ENCODE measurements at regions of chr10 and their contacts with region 1.

Region 1: DNA sequence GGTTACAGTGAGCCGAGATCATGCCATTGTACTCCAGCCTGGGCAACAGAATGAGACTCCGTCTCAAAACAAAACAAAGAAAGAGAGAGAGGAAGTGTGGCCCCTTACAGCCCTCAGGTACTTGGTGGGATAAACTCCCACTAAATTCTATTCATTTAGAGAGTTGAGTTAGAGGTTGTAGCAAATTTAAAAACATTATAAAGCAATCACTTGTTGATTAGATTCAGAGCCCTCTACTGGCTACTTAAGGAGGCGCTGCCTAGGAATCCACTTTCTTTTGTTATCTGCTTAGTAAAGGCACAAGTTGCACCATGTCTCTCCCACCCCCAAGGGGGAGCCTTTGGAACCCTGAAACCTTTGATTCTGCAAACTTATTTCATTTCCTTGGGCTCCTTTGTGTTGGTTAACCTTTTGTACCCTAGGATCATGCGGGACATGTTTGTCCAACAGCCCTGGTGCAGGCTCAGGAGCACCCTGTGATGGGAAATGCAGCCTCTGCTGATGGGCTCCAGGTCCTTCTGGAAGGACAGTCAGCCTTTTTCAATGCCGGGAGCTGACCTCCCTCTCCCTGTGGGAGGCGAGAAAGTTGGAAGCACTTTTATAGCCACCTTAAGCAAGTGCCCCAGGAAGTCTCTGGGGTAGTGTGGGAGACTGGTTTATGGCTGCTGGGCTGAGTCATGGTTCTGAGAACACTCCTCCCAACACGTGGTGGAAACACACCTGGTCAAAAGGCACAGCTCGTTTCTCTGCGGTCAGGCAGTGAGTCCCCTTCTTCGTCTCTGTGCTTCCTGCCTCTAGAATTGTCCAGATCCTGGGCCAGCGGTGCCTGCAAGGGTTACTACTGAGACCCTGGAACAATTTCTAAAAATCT is 2.3 kb downstream of the HKDC1 start:
- DNase-seq: peak; percentile 92
- ATAC-seq: peak; percentile 88
- H3K4me3 Mint-ChIP-seq: peak overlapping the region; percentile 65
- H3K27ac Mint-ChIP-seq: peak overlapping the region; percentile 87
- H3K4me1 Mint-ChIP-seq: peaks cover 33% of the 10 kb centered on the region
- H3K27me3 Mint-ChIP-seq: no peaks in the 10 kb centered on the region
- CTCF ChIP-seq: peak; percentile 87

Region 2: GRCh38 chr10:68938119-68938518 is 284.3 kb before region 1 on chr10:
- CTCF ChIA-PET with region 1: no interaction called
- POLR2A ChIA-PET with region 1: no interaction called
- intact Hi-C with region 1: no loop called
- DNase-seq: no peak
- ATAC-seq: no peak
- H3K4me3 Mint-ChIP-seq: no peak overlapping the region
- H3K27ac Mint-ChIP-seq: peak overlapping the region; percentile 58
- H3K4me1 Mint-ChIP-seq: peaks cover 9% of the 10 kb centered on the region
- H3K27me3 Mint-ChIP-seq: no peaks in the 10 kb centered on the region
- CTCF ChIP-seq: no peak

Region 3: DNA sequence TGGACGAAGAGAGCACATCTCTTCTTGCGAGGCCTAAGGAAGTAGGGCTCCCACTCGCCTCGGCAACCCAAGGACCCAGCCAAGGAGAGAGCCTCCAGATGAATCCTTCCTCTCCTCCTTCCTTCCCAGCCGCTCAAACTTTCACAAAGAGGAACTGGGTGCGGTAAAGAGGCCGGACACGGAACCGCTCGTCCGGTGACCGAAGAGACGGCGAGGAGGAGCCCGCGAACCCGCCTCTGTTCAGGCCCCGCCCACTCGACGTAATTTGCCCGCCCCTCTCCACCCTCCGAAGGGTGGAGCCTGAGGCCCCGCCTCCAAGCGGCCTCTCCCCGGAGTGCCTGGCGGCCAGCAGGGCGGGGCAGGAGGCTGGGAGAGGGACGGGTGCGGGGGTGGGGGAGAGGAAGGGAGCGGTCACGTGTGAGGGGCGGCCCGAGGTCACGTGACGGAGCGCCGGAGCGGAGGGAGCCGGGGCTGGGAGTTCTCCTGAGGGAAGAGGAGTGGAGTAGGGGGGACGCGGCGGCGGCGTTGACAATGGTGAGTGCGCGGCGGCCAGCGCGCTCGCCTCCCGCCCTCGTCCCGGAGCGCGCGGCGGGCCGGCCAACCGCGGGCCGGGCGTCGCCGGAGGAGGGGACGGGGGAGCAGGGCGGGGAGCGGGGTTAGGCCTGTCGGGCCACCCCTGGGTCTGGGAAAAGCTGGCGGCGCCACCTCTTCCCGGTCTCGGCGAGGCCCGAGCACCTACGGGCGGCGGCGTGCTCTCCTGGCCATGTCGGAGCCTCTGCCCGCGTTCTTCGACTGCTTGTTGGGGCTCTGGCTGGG is 98.4 kb before region 1 on chr10 and contains the start of gene VPS26A:
- CTCF ChIA-PET with region 1: no interaction called
- POLR2A ChIA-PET with region 1: interaction called, 3 read pairs
- intact Hi-C with region 1: loop called (anchors 10 kb)
- DNase-seq: peak; percentile 99
- ATAC-seq: peak; percentile 98
- H3K4me3 Mint-ChIP-seq: peak within 1 kb of the TSS; percentile 86
- H3K27ac Mint-ChIP-seq: peak within 1 kb of the TSS; percentile 90
- H3K4me1 Mint-ChIP-seq: peaks cover 23% of the 10 kb centered on the region
- H3K27me3 Mint-ChIP-seq: no peaks in the 10 kb centered on the region
- CTCF ChIP-seq: peak; percentile 5
- total RNA-seq, gene VPS26A: 33.1 to 34.5 TPM

Region 4: DNA sequence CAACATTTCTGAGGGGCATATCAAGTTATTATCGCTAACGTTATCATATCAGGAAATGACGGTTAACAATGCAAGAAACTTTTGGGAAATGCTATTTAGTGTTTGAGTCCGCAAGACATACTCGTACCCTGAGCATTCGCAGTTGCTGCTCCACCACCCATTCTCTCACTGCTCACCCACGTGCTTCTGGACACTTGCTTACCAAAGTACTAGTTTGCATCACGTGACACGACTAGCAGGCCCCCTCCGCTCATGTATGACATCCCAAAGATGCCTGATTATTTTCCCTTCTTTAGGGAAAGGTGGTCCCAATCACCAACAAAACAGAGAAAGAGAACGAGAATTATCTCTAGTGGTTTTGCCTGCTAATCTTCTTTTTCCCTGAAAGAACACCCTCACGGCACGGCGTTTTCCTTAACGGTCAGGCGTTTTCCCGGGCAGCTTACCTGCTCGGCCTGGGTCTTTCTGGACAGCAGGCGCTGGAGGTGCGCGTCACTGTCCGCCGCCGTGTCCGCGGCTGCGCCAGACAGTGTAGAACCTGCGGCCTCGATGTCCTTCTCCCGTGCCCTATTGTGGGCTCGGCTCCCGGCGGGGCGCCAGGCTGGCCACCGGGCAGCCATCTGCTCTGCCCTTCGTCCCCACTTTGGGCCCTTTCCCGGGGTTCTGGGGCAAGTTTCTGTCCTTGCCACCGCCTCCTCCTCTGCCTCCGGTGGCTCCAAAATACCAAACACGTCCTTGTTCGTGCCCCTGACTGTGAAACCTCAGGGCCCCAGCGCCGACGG is 42.5 kb before region 1 on chr10 and contains the start of gene SUPV3L1:
- CTCF ChIA-PET with region 1: no interaction called
- POLR2A ChIA-PET with region 1: no interaction called
- intact Hi-C with region 1: loop called (anchors 5 kb)
- DNase-seq: peak; percentile 96
- ATAC-seq: peak; percentile 91
- H3K4me3 Mint-ChIP-seq: peak within 1 kb of the TSS; percentile 84
- H3K27ac Mint-ChIP-seq: peak within 1 kb of the TSS; percentile 100
- H3K4me1 Mint-ChIP-seq: peaks cover 36% of the 10 kb centered on the region
- H3K27me3 Mint-ChIP-seq: no peaks in the 10 kb centered on the region
- CTCF ChIP-seq: no peak
- total RNA-seq, gene SUPV3L1: 37.6 to 42.7 TPM

Region 5: GRCh38 chr10:69262292-69262751 is 39.9 kb after region 1 on chr10:
- CTCF ChIA-PET with region 1: no interaction called
- POLR2A ChIA-PET with region 1: no interaction called
- intact Hi-C with region 1: no loop called
- DNase-seq: no peak
- ATAC-seq: peak; percentile 87
- H3K4me3 Mint-ChIP-seq: no peak overlapping the region
- H3K27ac Mint-ChIP-seq: peak overlapping the region; percentile 23
- H3K4me1 Mint-ChIP-seq: peaks cover 10% of the 10 kb centered on the region
- H3K27me3 Mint-ChIP-seq: no peaks in the 10 kb centered on the region
- CTCF ChIP-seq: no peak

Region 6: DNA sequence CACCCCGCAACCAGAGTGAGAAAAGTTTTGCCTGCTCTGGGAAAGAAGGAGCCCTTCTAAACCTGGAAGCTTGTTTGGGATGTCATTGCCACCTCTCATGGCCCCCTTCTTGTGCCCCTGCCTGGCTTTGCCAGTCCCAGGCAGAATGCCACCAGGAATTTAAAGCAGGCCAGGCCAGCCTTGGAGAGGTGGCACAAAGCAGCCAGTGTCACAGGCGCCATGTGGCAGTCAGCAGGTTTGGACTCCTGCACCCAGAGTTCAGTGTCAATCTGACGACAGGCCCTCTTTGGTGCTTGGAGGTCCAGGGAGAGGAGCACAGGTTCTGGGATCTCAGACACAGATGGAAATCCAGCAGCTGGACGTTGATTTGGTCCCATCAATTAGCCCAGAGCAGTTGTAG is 68.6 kb after region 1 on chr10:
- CTCF ChIA-PET with region 1: no interaction called
- POLR2A ChIA-PET with region 1: no interaction called
- intact Hi-C with region 1: no loop called
- DNase-seq: no peak
- ATAC-seq: no peak
- H3K4me3 Mint-ChIP-seq: no peak overlapping the region
- H3K27ac Mint-ChIP-seq: no peak overlapping the region
- H3K4me1 Mint-ChIP-seq: no peaks in the 10 kb centered on the region
- H3K27me3 Mint-ChIP-seq: no peaks in the 10 kb centered on the region
- CTCF ChIP-seq: no peak

Measured in activated CD8-positive, alpha-beta T cell treated with anti-CD3 and anti-CD28 coated beads for 36 hours (primary cell).